AG04450 (cell line): ENCODE measurements at regions of chr3 and their contacts with region 1.

Region 1: GRCh38 chr3:184371570-184372018 is 6.4 kb downstream of the THPO start:
- DNase-seq: peak; percentile 72
- H3K4me3 ChIP-seq: no peak overlapping the region
- H3K27ac ChIP-seq: no peak overlapping the region
- H3K27me3 ChIP-seq: peaks cover 28% of the 10 kb centered on the region
- CTCF ChIP-seq: peak; percentile 100

Region 2: GRCh38 chr3:184405075-184406030 is 33.8 kb after region 1 on chr3:
- CTCF ChIA-PET with region 1: interaction called, 14 read pairs
- POLR2A ChIA-PET with region 1: no interaction called
- DNase-seq: no peak
- H3K4me3 ChIP-seq: no peak overlapping the region
- H3K27ac ChIP-seq: no peak overlapping the region
- H3K27me3 ChIP-seq: peaks cover 26% of the 10 kb centered on the region
- CTCF ChIP-seq: no peak

Region 3: GRCh38 chr3:184469423-184469822 is 97.8 kb after region 1 on chr3:
- CTCF ChIA-PET with region 1: interaction called, 12 read pairs
- POLR2A ChIA-PET with region 1: no interaction called
- DNase-seq: no peak
- H3K4me3 ChIP-seq: no peak overlapping the region
- H3K27ac ChIP-seq: no peak overlapping the region
- H3K27me3 ChIP-seq: peaks cover 13% of the 10 kb centered on the region
- CTCF ChIP-seq: peak; percentile 66

Region 4: DNA sequence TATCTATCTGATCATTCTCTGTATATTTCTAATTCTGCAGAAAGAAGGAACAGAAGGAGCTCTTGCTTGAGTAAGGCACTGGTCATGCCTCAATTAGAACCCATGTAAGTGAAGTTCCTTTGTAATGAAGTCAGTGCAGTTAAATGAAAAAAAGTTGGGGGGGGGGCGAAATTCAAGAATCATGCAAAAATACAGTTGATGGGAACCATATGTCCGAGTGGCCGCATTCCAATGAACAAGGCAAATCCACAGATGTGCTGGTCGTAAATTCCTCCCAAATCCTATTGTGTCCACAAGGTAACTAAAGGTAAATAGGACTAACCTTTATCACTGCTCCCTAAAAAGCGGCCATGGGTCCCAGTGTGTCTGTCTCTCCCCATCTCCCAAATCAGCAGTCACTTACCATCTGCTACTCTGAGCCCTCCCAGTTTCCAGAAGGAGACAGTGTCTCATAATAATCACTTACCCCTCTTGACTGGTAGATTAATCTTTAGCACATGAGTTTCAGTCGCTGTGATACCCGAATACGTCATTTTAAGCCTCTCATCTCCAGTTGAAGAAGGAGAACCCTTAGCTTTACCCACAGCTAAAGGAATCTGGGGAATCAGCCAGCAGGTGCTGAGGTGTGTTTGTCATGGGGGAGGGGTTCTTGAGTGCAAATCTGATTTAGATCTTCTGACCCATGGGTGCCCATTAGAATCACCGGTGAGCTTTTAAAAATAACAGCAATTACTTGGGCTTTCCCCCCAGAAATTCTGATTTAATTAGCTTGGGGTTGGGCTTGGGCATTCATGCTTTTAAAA is 133.7 kb after region 1 on chr3:
- CTCF ChIA-PET with region 1: interaction called, 278 read pairs
- POLR2A ChIA-PET with region 1: no interaction called
- DNase-seq: no peak
- H3K4me3 ChIP-seq: no peak overlapping the region
- H3K27ac ChIP-seq: no peak overlapping the region
- H3K27me3 ChIP-seq: peaks cover 41% of the 10 kb centered on the region
- CTCF ChIP-seq: no peak

Region 5: GRCh38 chr3:184543843-184544512 is 172.4 kb after region 1 on chr3:
- CTCF ChIA-PET with region 1: interaction called, 215 read pairs
- POLR2A ChIA-PET with region 1: interaction called, 3 read pairs
- DNase-seq: peak; percentile 56
- H3K4me3 ChIP-seq: no peak overlapping the region
- H3K27ac ChIP-seq: no peak overlapping the region
- H3K27me3 ChIP-seq: peaks cover 28% of the 10 kb centered on the region
- CTCF ChIP-seq: peak; percentile 89

Region 6: GRCh38 chr3:184583578-184584425 is 212.2 kb after region 1 on chr3:
- CTCF ChIA-PET with region 1: no interaction called
- POLR2A ChIA-PET with region 1: no interaction called
- DNase-seq: no peak
- H3K4me3 ChIP-seq: peak overlapping the region; percentile 35; the same call in 1 of the 2 replicates
- H3K27ac ChIP-seq: no peak overlapping the region
- H3K27me3 ChIP-seq: peaks cover 12% of the 10 kb centered on the region
- CTCF ChIP-seq: peak; percentile 29

Region 7: DNA sequence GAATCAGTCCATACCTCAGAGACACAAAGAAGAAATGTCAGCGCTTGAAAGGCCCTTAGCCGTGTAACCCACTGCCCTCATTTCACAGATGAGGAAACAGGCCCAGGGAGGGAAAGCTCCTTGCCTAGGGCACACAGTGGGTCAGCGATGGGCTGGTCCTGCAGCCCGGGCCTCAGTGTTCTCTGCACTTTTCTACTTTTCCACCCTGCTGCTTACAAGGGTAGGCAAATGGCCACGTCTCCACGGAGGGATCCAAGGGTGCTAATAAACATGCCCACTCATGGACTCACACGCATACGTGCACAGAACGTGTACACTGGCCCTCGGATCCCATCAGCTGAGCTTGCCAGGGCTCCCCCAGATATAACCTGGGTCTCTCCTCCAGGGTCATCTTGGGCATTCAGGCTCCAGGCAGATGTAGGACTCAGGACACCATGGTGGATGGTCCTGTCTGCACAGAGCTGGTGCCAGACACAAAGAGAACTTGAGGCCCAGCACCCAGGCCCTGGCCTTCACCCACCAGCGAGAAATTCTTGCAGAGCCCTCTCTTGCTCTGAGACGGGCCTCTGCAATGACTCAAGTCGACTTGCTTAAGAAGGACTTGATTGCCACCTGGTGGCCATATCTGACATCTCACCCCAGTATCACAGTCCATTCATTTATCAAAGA is 405.9 kb after region 1 on chr3:
- CTCF ChIA-PET with region 1: interaction called, 17 read pairs
- POLR2A ChIA-PET with region 1: no interaction called
- DNase-seq: peak; percentile 95
- H3K4me3 ChIP-seq: no peak overlapping the region
- H3K27ac ChIP-seq: no peak overlapping the region
- H3K27me3 ChIP-seq: no peaks in the 10 kb centered on the region
- CTCF ChIP-seq: peak; percentile 75